HepG2 (cell line): ENCODE measurements at regions of chrX and their contacts with region 1.

Region 1: GRCh38 chrX:80808160-80808735 is 1.4 kb downstream of the BRWD3 start:
- DNase-seq: peak; percentile 61
- ATAC-seq: peak; percentile 73
- H3K4me3 ChIP-seq: peak overlapping the region; percentile 67 to 78 (median 73)
- H3K27ac ChIP-seq: peak overlapping the region; percentile 71
- H3K4me1 ChIP-seq: peaks cover 13% of the 10 kb centered on the region; the same call in 1 of the 2 replicates
- H3K27me3 ChIP-seq: no peaks in the 10 kb centered on the region
- CTCF ChIP-seq: no peak
- EP300 ChIP-seq: no peak
- POLR2A ChIP-seq: no peak
- RAD21 ChIP-seq: no peak

Region 2: DNA sequence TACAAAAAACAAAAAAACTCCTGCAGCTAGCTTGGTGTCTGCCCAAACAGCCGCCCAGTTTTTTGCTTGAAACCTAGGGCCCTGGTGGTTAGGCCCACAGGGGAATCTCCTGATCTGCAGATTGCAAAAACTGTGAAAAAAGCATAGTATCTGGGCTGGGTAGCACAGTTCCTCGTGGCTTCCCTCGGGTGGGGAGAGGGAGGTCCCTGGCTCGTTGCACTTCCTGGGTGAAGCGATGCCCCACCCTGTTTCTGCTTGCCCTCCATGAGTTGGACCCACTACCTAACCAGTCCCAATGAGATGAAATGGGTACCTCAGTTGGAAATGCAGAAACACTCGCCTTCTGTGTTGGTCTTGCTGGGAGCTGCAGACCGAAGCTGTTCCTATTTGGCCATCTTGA is 20.0 kb after region 1 on chrX:
- CTCF ChIA-PET with region 1: no interaction called
- POLR2A ChIA-PET with region 1: no interaction called
- in situ Hi-C with region 1: no loop called
- intact Hi-C with region 1: no loop called
- DNase-seq: no peak
- ATAC-seq: no peak
- H3K4me3 ChIP-seq: no peak overlapping the region
- H3K27ac ChIP-seq: no peak overlapping the region
- H3K4me1 ChIP-seq: no peaks in the 10 kb centered on the region
- H3K27me3 ChIP-seq: no peaks in the 10 kb centered on the region
- CTCF ChIP-seq: no peak
- EP300 ChIP-seq: no peak
- POLR2A ChIP-seq: no peak
- RAD21 ChIP-seq: no peak

Region 3: GRCh38 chrX:81121513-81122382 is 313.5 kb after region 1 on chrX:
- CTCF ChIA-PET with region 1: no interaction called
- POLR2A ChIA-PET with region 1: no interaction called
- in situ Hi-C with region 1: no loop called
- intact Hi-C with region 1: loop called (anchors 5 kb)
- DNase-seq: peak; percentile 41
- ATAC-seq: peak; percentile 98
- H3K4me3 ChIP-seq: peak overlapping the region; percentile 36 to 57 (median 47); a peak in 5 of 6 replicates
- H3K27ac ChIP-seq: no peak overlapping the region
- H3K4me1 ChIP-seq: peaks cover 6% of the 10 kb centered on the region; the same call in 1 of the 2 replicates
- H3K27me3 ChIP-seq: no peaks in the 10 kb centered on the region; a peak in 2 of 5 replicates
- CTCF ChIP-seq: no peak
- EP300 ChIP-seq: no peak
- POLR2A ChIP-seq: no peak
- RAD21 ChIP-seq: no peak

Region 4: DNA sequence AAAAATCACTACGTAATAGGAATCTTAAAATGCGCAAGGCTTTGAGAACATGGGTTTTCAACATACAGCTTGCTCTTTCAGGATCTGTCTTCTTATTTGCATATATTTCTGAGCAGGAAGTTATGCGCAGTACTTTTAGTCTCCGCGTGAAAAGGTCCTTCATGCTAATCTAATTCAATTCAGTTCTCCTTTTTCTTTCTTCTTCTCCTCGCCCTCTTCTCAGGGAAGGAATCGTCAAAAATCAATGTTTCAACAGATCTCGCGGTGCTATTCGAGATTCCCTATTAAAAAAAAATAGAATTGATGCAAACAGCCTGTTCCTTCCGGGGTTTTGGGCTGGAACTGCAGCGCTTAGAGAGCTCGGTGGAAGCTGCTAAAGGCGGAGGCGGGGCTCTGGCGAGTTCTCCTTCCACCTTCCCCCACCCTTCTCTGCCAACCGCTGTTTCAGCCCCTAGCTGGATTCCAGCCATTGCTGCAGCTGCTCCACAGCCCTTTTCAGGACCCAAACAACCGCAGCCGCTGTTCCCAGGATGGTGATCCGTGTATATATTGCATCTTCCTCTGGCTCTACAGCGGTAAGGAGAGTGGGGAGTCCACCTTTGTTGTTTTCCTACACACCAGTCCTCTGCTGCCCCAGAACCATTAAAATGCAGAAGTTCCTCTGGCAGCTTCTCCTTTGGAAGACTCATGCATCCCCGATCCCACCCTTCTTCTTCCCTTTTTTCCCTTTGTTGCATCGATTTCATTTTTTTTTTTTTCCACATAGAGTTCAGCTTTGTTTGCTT is 393.6 kb after region 1 on chrX and contains the starts of genes HMGN5 and SH3BGRL:
- CTCF ChIA-PET with region 1: no interaction called
- POLR2A ChIA-PET with region 1: no interaction called
- in situ Hi-C with region 1: no loop called
- intact Hi-C with region 1: loop called (anchors 10 kb)
- DNase-seq: peak; percentile 61
- ATAC-seq: peak; percentile 100
- H3K4me3 ChIP-seq: peak within 1 kb of the TSS; percentile 74 to 79 (median 77)
- H3K27ac ChIP-seq: peak within 1 kb of the TSS; percentile 51
- H3K4me1 ChIP-seq: no peaks in the 10 kb centered on the region
- H3K27me3 ChIP-seq: no peaks in the 10 kb centered on the region
- CTCF ChIP-seq: no peak
- EP300 ChIP-seq: no peak
- POLR2A ChIP-seq: peak in 1 of 2 experiments; percentile 28; a peak in 1 of 4 replicates
- RAD21 ChIP-seq: no peak
- total RNA-seq, gene HMGN5: 0.24 and 0.36 TPM in 2 replicates
- total RNA-seq, gene SH3BGRL: 8.9 and 17.9 TPM in 2 replicates